Activated naive CD4-positive, alpha-beta T cell treated with anti-CD3 and anti-CD28 coated beads for 36 hours (primary cell): ENCODE measurements at regions of chr10 and their contacts with region 1.

Region 1: DNA sequence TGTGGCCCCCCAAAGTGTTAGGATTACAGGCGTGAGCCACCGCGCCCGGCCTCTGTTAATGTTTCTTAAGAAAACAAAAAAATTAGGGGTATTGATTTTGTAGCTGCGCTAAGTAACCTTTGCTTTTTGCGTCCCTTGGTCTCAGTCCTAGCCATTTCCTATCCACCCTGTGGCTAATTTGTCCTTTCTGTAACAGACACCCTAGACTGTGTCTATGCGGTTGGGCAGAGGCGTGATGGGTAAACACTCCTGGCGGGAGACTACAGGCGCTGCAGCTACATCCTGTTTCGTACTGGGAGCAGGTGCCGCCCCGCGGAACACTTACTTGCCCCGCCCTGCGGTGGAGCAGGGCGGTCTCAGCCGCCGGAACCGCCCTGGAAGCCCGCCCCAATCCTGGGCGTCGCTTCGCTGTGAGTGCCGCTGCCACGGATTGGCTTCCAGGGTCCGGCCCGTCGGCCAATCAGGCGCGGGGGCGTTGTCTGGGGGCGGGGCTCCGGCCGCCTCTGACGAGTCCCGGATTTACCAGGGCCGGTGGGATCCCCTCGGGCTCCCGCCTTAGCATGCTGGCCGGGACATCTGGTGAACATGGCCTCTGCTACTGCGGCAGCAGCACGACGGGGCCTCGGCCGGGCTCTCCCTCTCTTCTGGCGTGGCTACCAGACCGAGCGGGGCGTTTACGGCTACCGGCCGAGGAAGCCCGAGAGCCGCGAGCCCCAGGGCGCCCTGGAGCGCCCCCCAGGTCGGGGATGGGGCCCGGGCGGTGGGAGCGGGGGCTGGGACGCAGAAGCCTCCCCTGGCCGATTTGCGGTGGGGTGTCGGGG is at the start of gene DHTKD1:
- DNase-seq: peak; percentile 99
- H3K4me3 Mint-ChIP-seq: peak within 1 kb of the TSS; percentile 83
- H3K27ac Mint-ChIP-seq: peak within 1 kb of the TSS; percentile 88
- H3K4me1 Mint-ChIP-seq: peaks cover 21% of the 10 kb centered on the region
- H3K27me3 Mint-ChIP-seq: no peaks in the 10 kb centered on the region
- total RNA-seq, gene DHTKD1: 17.0 to 20.1 TPM

Region 2: DNA sequence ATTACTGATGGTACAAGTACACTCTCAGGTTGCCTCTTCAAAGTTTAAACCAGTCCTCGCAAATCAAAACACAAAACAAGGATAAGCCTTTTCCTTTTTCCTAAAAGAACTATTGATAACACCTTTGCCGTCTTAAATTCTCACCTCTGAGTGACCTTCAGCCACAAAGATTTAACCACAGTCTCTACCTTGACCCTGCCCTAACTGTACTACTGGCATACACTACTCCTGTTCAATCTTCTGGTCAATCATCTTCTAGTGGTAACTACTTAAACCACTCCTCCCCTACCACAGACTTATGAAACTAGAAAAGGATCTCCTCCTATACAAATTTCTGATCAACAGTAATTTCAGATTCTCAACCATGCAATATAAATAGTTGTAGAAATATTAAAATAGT is 41.1 kb before region 1 on chr10:
- CTCF ChIA-PET with region 1: no interaction called
- intact Hi-C with region 1: loop called (anchors 1 kb)
- DNase-seq: no peak
- H3K4me3 Mint-ChIP-seq: no peak overlapping the region
- H3K27ac Mint-ChIP-seq: no peak overlapping the region
- H3K4me1 Mint-ChIP-seq: peaks cover 47% of the 10 kb centered on the region
- H3K27me3 Mint-ChIP-seq: no peaks in the 10 kb centered on the region

Region 3: DNA sequence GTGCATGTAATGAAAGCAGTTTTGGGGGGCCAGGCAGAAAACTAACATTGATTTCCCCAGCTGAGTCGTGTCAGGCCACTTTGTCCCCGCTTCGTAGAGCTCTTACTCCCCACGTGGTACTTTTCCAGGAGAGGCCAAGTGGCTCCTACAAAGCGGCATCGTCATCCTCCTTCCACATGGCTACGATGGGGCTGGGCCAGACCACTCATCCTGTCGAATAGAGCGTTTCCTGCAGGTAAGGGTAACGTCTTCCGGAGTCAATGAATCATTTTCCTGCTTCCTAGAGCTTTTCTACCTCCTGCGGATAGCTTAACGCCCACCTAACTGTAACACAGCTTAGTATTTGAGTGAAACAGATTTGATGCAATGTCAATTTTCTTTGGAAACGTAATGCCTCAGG is 39.1 kb after region 1 on chr10:
- CTCF ChIA-PET with region 1: no interaction called
- intact Hi-C with region 1: loop called (anchors 1 kb)
- DNase-seq: no peak
- H3K4me3 Mint-ChIP-seq: no peak overlapping the region
- H3K27ac Mint-ChIP-seq: no peak overlapping the region
- H3K4me1 Mint-ChIP-seq: peaks cover 20% of the 10 kb centered on the region
- H3K27me3 Mint-ChIP-seq: no peaks in the 10 kb centered on the region

Region 4: GRCh38 chr10:12129222-12130111 is 60.8 kb after region 1 on chr10 and contains the start of gene SEC61A2:
- CTCF ChIA-PET with region 1: interaction called, 3 read pairs
- intact Hi-C with region 1: loop called (anchors 1 kb)
- DNase-seq: peak; percentile 97
- H3K4me3 Mint-ChIP-seq: peak within 1 kb of the TSS; percentile 83
- H3K27ac Mint-ChIP-seq: peak within 1 kb of the TSS; percentile 76
- H3K4me1 Mint-ChIP-seq: peaks cover 33% of the 10 kb centered on the region
- H3K27me3 Mint-ChIP-seq: no peaks in the 10 kb centered on the region
- total RNA-seq, gene SEC61A2: 18.2 to 20.0 TPM

Region 5: DNA sequence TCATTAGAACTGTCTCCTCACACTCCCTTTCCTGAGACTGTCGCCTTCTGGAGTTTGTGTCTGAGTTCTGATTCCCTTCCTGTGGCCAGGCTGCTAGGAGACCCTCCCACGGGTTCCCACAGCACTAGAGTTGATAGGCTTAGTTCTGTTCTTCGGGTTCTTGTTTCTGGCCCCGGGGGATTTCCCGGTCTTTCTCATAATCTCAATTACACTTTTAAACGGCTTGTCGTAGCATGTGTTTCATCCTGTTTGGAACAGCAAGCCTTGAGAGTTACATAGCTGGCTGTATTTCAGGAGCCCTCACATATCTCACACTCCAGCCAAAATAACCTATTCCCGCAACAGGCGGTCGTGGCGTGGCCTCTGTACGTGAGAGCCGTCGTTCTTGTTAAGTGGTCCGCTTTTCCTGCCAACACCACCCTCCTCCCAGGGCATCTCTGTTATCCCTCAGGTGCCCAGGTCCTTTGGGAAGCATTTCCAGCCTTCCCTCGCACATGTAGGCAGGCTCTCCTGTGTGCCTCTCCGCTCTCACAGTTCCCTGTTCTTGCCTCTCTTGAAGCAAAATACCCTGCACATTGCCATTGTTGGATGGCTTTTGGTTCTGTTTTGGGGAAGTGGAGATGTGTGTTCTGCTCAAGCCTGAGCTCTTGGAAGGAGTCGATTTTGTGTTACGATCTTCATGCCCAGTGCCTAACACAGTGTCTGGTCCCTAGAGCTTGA is 173.3 kb after region 1 on chr10:
- CTCF ChIA-PET with region 1: no interaction called
- intact Hi-C with region 1: loop called (anchors 2 kb)
- DNase-seq: peak; percentile 84
- H3K4me3 Mint-ChIP-seq: peak overlapping the region; percentile 36
- H3K27ac Mint-ChIP-seq: peak overlapping the region; percentile 85
- H3K4me1 Mint-ChIP-seq: peaks cover 27% of the 10 kb centered on the region
- H3K27me3 Mint-ChIP-seq: no peaks in the 10 kb centered on the region